PC-3 (cell line): ENCODE measurements at regions of chr4 and their contacts with region 1.

Region 1: DNA sequence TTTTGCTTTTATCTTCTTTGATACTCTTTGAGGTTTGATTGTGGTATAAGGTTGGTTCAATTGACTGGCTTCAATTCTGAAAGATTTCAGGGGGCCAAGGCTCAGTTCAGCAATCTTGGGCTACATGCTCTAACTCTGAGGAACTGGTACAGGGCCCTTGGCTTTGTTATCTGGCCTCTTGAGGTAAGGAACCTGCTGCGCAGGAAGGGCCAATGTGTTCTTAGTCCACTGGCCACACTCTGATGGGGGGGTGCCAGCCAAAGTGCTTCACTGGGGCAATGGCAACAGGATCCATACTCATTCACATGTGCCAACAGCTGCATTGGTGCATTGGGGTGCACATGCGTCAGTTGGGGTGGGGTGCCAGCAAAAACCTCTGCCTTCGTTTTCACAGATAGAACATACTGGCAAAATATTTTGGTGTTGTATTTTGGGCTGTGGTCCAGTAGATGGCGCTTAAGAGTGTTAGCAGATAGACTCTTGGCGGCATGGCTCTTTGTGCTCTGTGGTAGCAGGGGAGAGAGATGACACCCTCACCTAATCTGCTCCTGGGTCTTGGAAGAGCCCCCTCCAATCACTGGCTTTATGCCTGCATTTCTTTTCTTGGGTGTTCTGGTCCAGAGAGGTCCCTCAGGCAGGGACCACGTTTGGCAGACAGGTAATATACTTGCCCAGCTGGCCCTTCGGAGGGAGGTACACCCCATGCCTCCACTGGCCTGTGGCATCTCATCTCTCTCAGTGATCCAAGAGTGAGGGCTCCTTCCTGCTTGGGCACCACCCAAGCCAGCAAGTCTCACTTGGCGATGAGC is 42.9 kb downstream of the NDST3 start:
- DNase-seq: peak; percentile 46
- ATAC-seq: peak; percentile 67
- H3K4me3 ChIP-seq: no peak overlapping the region
- H3K27ac ChIP-seq: no peak overlapping the region
- H3K4me1 ChIP-seq: no peaks in the 10 kb centered on the region
- H3K27me3 ChIP-seq: no peaks in the 10 kb centered on the region
- CTCF ChIP-seq: peak; percentile 61

Region 2: GRCh38 chr4:117740736-117741135 is 336.4 kb before region 1 on chr4:
- CTCF ChIA-PET with region 1: no interaction called
- POLR2A ChIA-PET with region 1: no interaction called
- intact Hi-C with region 1: no loop called
- DNase-seq: no peak
- ATAC-seq: no peak
- H3K4me3 ChIP-seq: no peak overlapping the region
- H3K27ac ChIP-seq: no peak overlapping the region
- H3K4me1 ChIP-seq: no peaks in the 10 kb centered on the region
- H3K27me3 ChIP-seq: no peaks in the 10 kb centered on the region
- CTCF ChIP-seq: no peak

Region 3: GRCh38 chr4:117983541-117984365 is 93.4 kb before region 1 on chr4:
- CTCF ChIA-PET with region 1: no interaction called
- POLR2A ChIA-PET with region 1: no interaction called
- intact Hi-C with region 1: no loop called
- DNase-seq: no peak
- ATAC-seq: peak; percentile 40; the same call in 1 of the 2 replicates
- H3K4me3 ChIP-seq: no peak overlapping the region
- H3K27ac ChIP-seq: no peak overlapping the region
- H3K4me1 ChIP-seq: no peaks in the 10 kb centered on the region
- H3K27me3 ChIP-seq: no peaks in the 10 kb centered on the region
- CTCF ChIP-seq: no peak

Region 4: DNA sequence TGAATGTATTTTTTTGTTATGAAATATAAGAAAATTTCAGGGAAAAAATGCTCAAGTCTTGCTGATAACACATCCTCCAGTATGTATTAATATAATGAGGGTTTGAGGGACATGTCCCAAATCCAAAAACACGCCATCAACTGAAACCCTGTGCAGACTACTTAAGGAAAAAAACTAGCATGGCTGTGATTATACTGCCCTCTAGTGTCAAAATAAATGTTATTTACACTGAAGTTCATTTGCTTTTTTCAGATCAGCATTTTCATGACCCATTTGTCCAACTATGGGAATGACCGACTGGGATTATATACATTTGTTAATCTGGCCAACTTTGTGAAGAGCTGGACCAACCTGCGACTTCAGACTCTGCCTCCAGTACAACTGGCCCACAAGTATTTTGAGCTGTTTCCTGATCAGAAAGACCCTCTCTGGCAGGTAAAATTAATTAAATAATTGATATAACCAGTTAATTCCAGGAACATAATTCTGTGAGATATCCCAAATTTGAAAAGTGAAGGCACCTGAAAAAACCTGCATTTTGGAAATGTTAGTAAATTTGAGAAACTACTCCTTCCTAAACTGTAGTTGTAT is 147.2 kb after region 1 on chr4:
- CTCF ChIA-PET with region 1: no interaction called
- POLR2A ChIA-PET with region 1: no interaction called
- intact Hi-C with region 1: loop called (anchors 1 kb)
- DNase-seq: peak; percentile 63
- ATAC-seq: peak; percentile 54
- H3K4me3 ChIP-seq: no peak overlapping the region
- H3K27ac ChIP-seq: no peak overlapping the region
- H3K4me1 ChIP-seq: no peaks in the 10 kb centered on the region
- H3K27me3 ChIP-seq: no peaks in the 10 kb centered on the region
- CTCF ChIP-seq: peak; percentile 68

Region 5: DNA sequence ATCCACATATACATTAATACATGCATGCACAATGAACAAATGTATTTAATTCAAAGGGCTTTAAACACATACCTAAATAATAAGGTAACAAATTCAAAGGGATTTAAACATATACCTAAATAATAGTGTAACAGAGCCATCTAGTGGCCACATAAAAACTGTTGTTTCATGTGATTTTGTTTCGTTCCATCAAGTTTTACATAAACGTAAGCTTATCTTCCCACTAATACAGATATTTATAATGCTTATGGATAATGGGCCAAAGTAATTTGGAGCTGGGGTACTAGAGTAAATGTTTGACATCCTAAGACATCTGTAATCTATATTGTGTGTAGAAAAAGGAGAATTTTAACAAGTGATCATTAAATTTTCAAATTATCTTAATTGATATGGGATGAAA is 193.3 kb after region 1 on chr4:
- CTCF ChIA-PET with region 1: no interaction called
- POLR2A ChIA-PET with region 1: no interaction called
- intact Hi-C with region 1: loop called (anchors 2 kb)
- DNase-seq: peak; percentile 66
- ATAC-seq: no peak
- H3K4me3 ChIP-seq: no peak overlapping the region
- H3K27ac ChIP-seq: no peak overlapping the region
- H3K4me1 ChIP-seq: no peaks in the 10 kb centered on the region
- H3K27me3 ChIP-seq: no peaks in the 10 kb centered on the region
- CTCF ChIP-seq: peak; percentile 64

Region 6: GRCh38 chr4:118760493-118760892 is 683.3 kb after region 1 on chr4:
- CTCF ChIA-PET with region 1: no interaction called
- POLR2A ChIA-PET with region 1: no interaction called
- intact Hi-C with region 1: no loop called
- DNase-seq: no peak
- ATAC-seq: no peak
- H3K4me3 ChIP-seq: no peak overlapping the region
- H3K27ac ChIP-seq: no peak overlapping the region
- H3K4me1 ChIP-seq: peaks cover 5% of the 10 kb centered on the region
- H3K27me3 ChIP-seq: no peaks in the 10 kb centered on the region
- CTCF ChIP-seq: no peak